Activated CD4-positive, alpha-beta memory T cell treated with anti-CD3 and anti-CD28 coated beads, Interleukin-2, amount 10 ng/mL, durations not matched to agents 7 days and 5 days (primary cell): ENCODE measurements at regions of chr1 and their contacts with region 1.

Region 1: GRCh38 chr1:119275145-119276134 is 93.1 kb upstream of the HAO2 start:
- DNase-seq: peak; percentile 42
- H3K4me3 Mint-ChIP-seq: no peak overlapping the region
- H3K27ac Mint-ChIP-seq: no peak overlapping the region
- H3K4me1 Mint-ChIP-seq: no peaks in the 10 kb centered on the region
- H3K27me3 Mint-ChIP-seq: peaks cover 12% of the 10 kb centered on the region

Region 2: GRCh38 chr1:119286587-119287181 is 11.2 kb after region 1 on chr1:
- CTCF ChIA-PET with region 1: interaction called, 11 read pairs
- POLR2A ChIA-PET with region 1: no interaction called
- DNase-seq: no peak
- H3K4me3 Mint-ChIP-seq: no peak overlapping the region
- H3K27ac Mint-ChIP-seq: no peak overlapping the region
- H3K4me1 Mint-ChIP-seq: no peaks in the 10 kb centered on the region
- H3K27me3 Mint-ChIP-seq: peaks cover 8% of the 10 kb centered on the region

Region 3: GRCh38 chr1:119367427-119368124 is 92.1 kb after region 1 on chr1:
- CTCF ChIA-PET with region 1: interaction called, 11 read pairs
- POLR2A ChIA-PET with region 1: no interaction called
- DNase-seq: no peak
- H3K4me3 Mint-ChIP-seq: no peak overlapping the region
- H3K27ac Mint-ChIP-seq: no peak overlapping the region
- H3K4me1 Mint-ChIP-seq: no peaks in the 10 kb centered on the region
- H3K27me3 Mint-ChIP-seq: peaks cover 6% of the 10 kb centered on the region